Endothelial cell of umbilical vein (primary cell): ENCODE measurements at regions of chr11 and their contacts with region 1.

Region 1: GRCh38 chr11:116835791-116836631 is 1.4 kb downstream of the APOA1 start:
- DNase-seq: peak; percentile 94
- H3K4me3 ChIP-seq: peak overlapping the region; percentile 1 to 32 (median 15)
- H3K27ac ChIP-seq: no peak overlapping the region
- H3K4me1 ChIP-seq: peaks cover 6% of the 10 kb centered on the region
- H3K27me3 ChIP-seq: no peaks in the 10 kb centered on the region
- CTCF ChIP-seq: peak; percentile 56 to 81
- POLR2A ChIP-seq: no peak

Region 2: GRCh38 chr11:116732271-116733042 is 103.6 kb before region 1 on chr11:
- CTCF ChIA-PET with region 1: interaction called, 19 read pairs
- POLR2A ChIA-PET with region 1: no interaction called
- dilution Hi-C with region 1: no loop called
- intact Hi-C with region 1: loop called (anchors 5 kb)
- DNase-seq: peak; percentile 40
- H3K4me3 ChIP-seq: no peak overlapping the region
- H3K27ac ChIP-seq: no peak overlapping the region
- H3K4me1 ChIP-seq: no peaks in the 10 kb centered on the region
- H3K27me3 ChIP-seq: peaks cover 8 to 15% of the 10 kb centered on the region in 2 experiments
- CTCF ChIP-seq: peak; percentile 78 to 96
- POLR2A ChIP-seq: no peak

Region 3: DNA sequence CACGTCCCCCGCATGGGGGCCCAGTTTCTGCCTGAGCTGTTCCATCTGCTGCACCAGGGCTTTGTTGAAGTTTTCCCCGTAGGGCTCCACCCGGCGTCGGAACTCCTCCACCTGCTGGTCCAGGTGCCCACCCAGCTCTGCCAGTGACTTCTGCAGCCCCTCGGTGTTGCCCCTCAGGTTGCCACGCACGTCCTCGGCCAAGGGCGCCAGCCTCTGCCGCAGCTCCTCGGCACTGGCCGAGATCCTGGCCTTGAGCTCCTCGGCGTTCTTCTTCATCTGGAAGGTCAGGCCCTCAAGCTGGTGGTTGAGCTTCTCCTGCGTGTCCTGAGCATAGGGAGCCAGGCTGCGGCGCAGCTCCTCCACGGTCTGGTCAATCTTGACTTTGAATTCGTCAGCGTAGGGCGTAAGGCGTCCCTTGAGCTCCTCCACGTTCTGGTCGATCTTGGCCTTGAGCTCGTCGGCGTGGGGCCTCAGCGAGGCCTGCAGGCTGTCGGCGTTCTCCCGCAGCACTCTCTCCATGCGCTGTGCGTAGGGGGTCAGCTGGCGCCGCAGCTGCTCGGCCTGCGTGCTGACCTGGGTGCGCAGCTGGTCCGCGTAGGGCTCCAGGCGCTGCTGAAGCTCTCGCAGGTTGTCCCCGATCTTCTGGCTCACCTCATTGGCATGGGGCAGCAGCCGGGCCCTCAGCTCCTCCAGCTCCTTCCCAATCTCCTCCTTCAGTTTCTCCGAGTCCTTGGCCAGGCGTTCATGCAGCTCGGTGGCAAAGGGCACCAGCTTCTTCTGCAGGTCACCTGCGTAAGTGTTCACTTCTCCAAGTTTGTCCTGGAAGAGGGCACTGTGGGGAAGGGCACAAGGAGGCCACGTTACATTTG is 14.7 kb before region 1 on chr11:
- CTCF ChIA-PET with region 1: interaction called, 22 read pairs
- POLR2A ChIA-PET with region 1: no interaction called
- dilution Hi-C with region 1: no loop called
- intact Hi-C with region 1: no loop called
- DNase-seq: no peak
- H3K4me3 ChIP-seq: no peak overlapping the region
- H3K27ac ChIP-seq: no peak overlapping the region
- H3K4me1 ChIP-seq: no peaks in the 10 kb centered on the region
- H3K27me3 ChIP-seq: no peaks in the 10 kb centered on the region
- CTCF ChIP-seq: no peak
- POLR2A ChIP-seq: no peak

Region 4: DNA sequence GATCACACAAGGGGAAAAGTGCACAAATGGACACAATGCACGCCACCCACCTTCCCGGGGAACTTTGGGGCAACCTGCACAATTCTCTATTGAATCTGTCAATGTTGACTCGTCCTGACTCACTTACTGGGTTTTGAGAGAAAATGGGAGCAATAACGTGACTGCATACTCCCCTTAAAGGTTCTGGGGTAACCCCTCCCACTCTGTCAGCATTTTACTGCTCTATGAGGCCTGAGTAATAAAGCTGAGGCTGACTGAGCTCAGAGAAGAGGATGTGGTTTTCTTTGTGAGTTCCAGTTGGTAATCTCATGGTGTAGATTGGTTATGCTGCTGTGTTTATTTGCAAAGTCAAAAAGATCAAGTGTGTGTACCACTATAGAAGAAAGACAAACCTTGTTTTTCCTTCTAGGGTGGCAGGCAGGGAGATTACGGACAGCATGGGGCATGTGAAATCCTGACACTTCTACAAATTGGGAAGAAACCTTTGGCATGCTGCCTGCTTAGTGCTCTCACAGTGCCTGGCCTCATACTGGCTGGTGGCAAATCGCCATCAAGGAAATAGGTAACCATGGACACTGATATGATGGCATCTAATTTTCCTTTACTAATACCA is 17.6 kb after region 1 on chr11:
- CTCF ChIA-PET with region 1: interaction called, 18 read pairs
- POLR2A ChIA-PET with region 1: no interaction called
- dilution Hi-C with region 1: no loop called
- intact Hi-C with region 1: no loop called
- DNase-seq: peak; percentile 79
- H3K4me3 ChIP-seq: no peak overlapping the region
- H3K27ac ChIP-seq: peak overlapping the region; percentile 74
- H3K4me1 ChIP-seq: peaks cover 26% of the 10 kb centered on the region
- H3K27me3 ChIP-seq: no peaks in the 10 kb centered on the region
- CTCF ChIP-seq: no peak
- POLR2A ChIP-seq: no peak

Region 5: GRCh38 chr11:118287006-118287405 is 1451.0 kb after region 1 on chr11:
- CTCF ChIA-PET with region 1: no interaction called
- POLR2A ChIA-PET with region 1: no interaction called
- dilution Hi-C with region 1: no loop called
- intact Hi-C with region 1: no loop called
- DNase-seq: no peak
- H3K4me3 ChIP-seq: no peak overlapping the region
- H3K27ac ChIP-seq: no peak overlapping the region
- H3K4me1 ChIP-seq: no peaks in the 10 kb centered on the region
- H3K27me3 ChIP-seq: no peaks in the 10 kb centered on the region
- CTCF ChIP-seq: no peak
- POLR2A ChIP-seq: no peak